ENCODE measurements at regions of chr14 and their contacts with region 1.

Region 1: GRCh38 chr14:80055667-80056496 is 155.4 kb downstream of the DIO2 start:
- DNase-seq: peak; percentile 47 to 60
- H3K4me3 ChIP-seq: no peak overlapping the region
- H3K4me3 Mint-ChIP-seq: no peak overlapping the region
- H3K27ac Mint-ChIP-seq: no peak overlapping the region
- H3K4me1 ChIP-seq: no peaks in the 10 kb centered on the region
- H3K4me1 Mint-ChIP-seq: peaks cover 6% of the 10 kb centered on the region
- H3K27me3 ChIP-seq: no peaks in the 10 kb centered on the region
- H3K27me3 Mint-ChIP-seq: no peaks in the 10 kb centered on the region
- CTCF ChIP-seq: peak; percentile 85 to 88

Region 2: DNA sequence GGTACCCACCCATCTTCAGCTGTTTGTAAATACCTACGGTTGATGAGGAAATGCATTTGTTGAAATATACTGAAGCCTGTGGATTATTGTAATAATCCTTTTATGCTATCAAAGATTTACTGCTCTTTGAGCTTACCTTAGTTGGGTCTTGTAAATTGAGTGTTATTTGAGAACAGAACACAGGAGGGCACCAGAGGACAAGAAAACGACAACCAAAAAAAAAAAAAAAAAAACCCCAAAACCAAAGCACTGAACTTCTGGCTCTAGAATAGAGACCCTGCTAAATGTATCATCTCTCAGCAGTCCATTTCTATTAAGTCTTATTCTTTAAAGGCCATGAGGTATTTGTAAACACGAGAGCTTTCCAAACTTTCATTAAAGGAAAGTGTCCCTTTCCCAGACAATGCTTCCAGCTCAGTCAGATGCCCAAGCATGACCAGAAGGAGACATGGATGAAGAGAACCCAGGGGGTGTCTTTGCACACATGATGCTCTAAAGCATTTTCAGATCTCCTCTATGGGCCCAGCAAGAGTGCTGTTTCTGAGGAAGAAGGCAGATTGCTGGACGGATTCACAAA is 1121.8 kb before region 1 on chr14:
- CTCF ChIA-PET with region 1: no interaction called
- POLR2A ChIA-PET with region 1: no interaction called
- intact Hi-C with region 1: loop called (anchors 2 kb)
- DNase-seq: peak in 1 of 2 experiments; percentile 34
- H3K4me3 ChIP-seq: no peak overlapping the region
- H3K4me3 Mint-ChIP-seq: no peak overlapping the region
- H3K27ac Mint-ChIP-seq: no peak overlapping the region
- H3K4me1 ChIP-seq: no peaks in the 10 kb centered on the region
- H3K4me1 Mint-ChIP-seq: no peaks in the 10 kb centered on the region
- H3K27me3 ChIP-seq: no peaks in the 10 kb centered on the region
- H3K27me3 Mint-ChIP-seq: no peaks in the 10 kb centered on the region
- CTCF ChIP-seq: peak; percentile 55 to 66

Region 3: GRCh38 chr14:79904497-79904896 is 151.4 kb before region 1 on chr14:
- CTCF ChIA-PET with region 1: no interaction called
- POLR2A ChIA-PET with region 1: no interaction called
- intact Hi-C with region 1: no loop called
- DNase-seq: no peak
- H3K4me3 ChIP-seq: no peak overlapping the region
- H3K4me3 Mint-ChIP-seq: no peak overlapping the region
- H3K27ac Mint-ChIP-seq: no peak overlapping the region
- H3K4me1 ChIP-seq: no peaks in the 10 kb centered on the region
- H3K4me1 Mint-ChIP-seq: no peaks in the 10 kb centered on the region
- H3K27me3 ChIP-seq: no peaks in the 10 kb centered on the region
- H3K27me3 Mint-ChIP-seq: no peaks in the 10 kb centered on the region
- CTCF ChIP-seq: no peak

Region 4: DNA sequence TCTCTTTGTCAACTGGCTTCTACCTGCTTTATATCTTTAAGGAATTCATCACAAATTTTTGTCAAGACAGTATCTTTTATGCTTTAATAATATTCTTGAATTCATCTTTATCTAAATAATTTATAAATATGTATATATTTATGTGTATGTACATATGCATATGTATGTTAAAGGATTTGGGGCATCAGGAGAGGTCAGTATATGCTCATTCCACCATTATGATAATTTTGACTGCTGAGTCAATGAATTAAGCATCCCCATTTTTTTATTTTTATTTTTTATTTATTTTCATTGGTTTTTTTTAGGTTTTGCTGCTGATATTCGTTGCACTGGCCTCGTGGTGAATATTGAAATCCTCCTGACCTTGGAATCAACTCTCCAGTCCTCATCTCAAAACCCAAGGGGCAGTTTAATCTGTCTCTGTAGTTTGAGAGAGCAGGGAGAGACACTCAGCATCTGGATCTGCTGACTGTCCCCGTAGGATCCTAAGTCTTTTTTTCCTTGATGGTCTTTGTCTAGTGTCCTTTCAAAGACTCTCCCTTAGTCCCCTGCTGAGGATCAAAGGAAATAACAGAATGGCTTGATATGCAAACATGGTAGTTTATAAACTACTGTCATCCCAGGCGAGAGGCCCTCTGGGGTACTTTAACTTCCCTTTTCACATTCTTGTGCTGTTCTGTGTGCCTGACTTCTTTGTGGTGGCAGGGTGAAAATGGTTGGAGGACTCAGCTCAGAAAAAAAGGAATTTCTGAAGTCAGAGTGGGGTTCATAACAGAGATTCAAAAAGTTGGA is 63.3 kb before region 1 on chr14:
- CTCF ChIA-PET with region 1: no interaction called
- POLR2A ChIA-PET with region 1: no interaction called
- intact Hi-C with region 1: no loop called
- DNase-seq: no peak
- H3K4me3 ChIP-seq: no peak overlapping the region
- H3K4me3 Mint-ChIP-seq: no peak overlapping the region
- H3K27ac Mint-ChIP-seq: no peak overlapping the region
- H3K4me1 ChIP-seq: no peaks in the 10 kb centered on the region
- H3K4me1 Mint-ChIP-seq: no peaks in the 10 kb centered on the region
- H3K27me3 ChIP-seq: no peaks in the 10 kb centered on the region
- H3K27me3 Mint-ChIP-seq: no peaks in the 10 kb centered on the region
- CTCF ChIP-seq: no peak

Region 5: GRCh38 chr14:80003138-80003537 is 52.7 kb before region 1 on chr14:
- CTCF ChIA-PET with region 1: no interaction called
- POLR2A ChIA-PET with region 1: no interaction called
- intact Hi-C with region 1: no loop called
- DNase-seq: peak in 1 of 2 experiments; percentile 25
- H3K4me3 ChIP-seq: no peak overlapping the region
- H3K4me3 Mint-ChIP-seq: no peak overlapping the region
- H3K27ac Mint-ChIP-seq: no peak overlapping the region
- H3K4me1 ChIP-seq: peaks cover 11% of the 10 kb centered on the region
- H3K4me1 Mint-ChIP-seq: peaks cover 12% of the 10 kb centered on the region
- H3K27me3 ChIP-seq: no peaks in the 10 kb centered on the region
- H3K27me3 Mint-ChIP-seq: no peaks in the 10 kb centered on the region
- CTCF ChIP-seq: no peak

Region 6: GRCh38 chr14:80078501-80078900 is 22.6 kb after region 1 on chr14:
- CTCF ChIA-PET with region 1: no interaction called
- POLR2A ChIA-PET with region 1: no interaction called
- intact Hi-C with region 1: no loop called
- DNase-seq: no peak
- H3K4me3 ChIP-seq: no peak overlapping the region
- H3K4me3 Mint-ChIP-seq: no peak overlapping the region
- H3K27ac Mint-ChIP-seq: no peak overlapping the region
- H3K4me1 ChIP-seq: no peaks in the 10 kb centered on the region
- H3K4me1 Mint-ChIP-seq: no peaks in the 10 kb centered on the region
- H3K27me3 ChIP-seq: no peaks in the 10 kb centered on the region
- H3K27me3 Mint-ChIP-seq: no peaks in the 10 kb centered on the region
- CTCF ChIP-seq: no peak

Region 7: DNA sequence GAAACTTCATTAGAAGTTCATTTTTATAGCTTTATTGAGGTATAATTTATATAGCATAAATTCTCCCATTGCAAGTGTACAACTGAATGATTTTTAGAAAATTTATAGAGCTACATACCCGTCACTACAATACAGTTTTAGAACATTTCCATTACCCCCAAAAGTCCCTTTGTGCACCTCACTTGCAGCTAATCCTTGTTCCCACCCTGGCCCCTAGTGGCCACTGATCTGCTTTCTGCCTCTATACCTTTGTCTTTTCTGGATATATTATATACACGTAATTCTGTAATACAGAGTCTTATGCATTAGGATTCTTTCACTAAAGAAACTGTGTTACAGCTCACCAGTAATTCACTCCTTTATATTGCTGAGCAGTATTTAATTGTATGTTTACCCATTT is 300.5 kb after region 1 on chr14:
- CTCF ChIA-PET with region 1: no interaction called
- POLR2A ChIA-PET with region 1: no interaction called
- intact Hi-C with region 1: loop called (anchors 1 kb)
- DNase-seq: peak in 1 of 2 experiments; percentile 21
- H3K4me3 ChIP-seq: no peak overlapping the region
- H3K4me3 Mint-ChIP-seq: no peak overlapping the region
- H3K27ac Mint-ChIP-seq: no peak overlapping the region
- H3K4me1 ChIP-seq: no peaks in the 10 kb centered on the region
- H3K4me1 Mint-ChIP-seq: no peaks in the 10 kb centered on the region
- H3K27me3 ChIP-seq: no peaks in the 10 kb centered on the region
- H3K27me3 Mint-ChIP-seq: no peaks in the 10 kb centered on the region
- CTCF ChIP-seq: peak; percentile 47 to 52

Region 8: GRCh38 chr14:80587075-80587724 is 531.3 kb after region 1 on chr14:
- CTCF ChIA-PET with region 1: interaction called, 8 read pairs
- POLR2A ChIA-PET with region 1: no interaction called
- intact Hi-C with region 1: loop called (anchors 2 kb)
- DNase-seq: no peak
- H3K4me3 ChIP-seq: no peak overlapping the region
- H3K4me3 Mint-ChIP-seq: no peak overlapping the region
- H3K27ac Mint-ChIP-seq: no peak overlapping the region
- H3K4me1 ChIP-seq: peaks cover 15% of the 10 kb centered on the region
- H3K4me1 Mint-ChIP-seq: peaks cover 12% of the 10 kb centered on the region
- H3K27me3 ChIP-seq: no peaks in the 10 kb centered on the region
- H3K27me3 Mint-ChIP-seq: no peaks in the 10 kb centered on the region
- CTCF ChIP-seq: peak; percentile 21 to 46

Region 9: GRCh38 chr14:80987235-80988032 is 931.6 kb after region 1 on chr14:
- CTCF ChIA-PET with region 1: interaction called, 6 read pairs
- POLR2A ChIA-PET with region 1: no interaction called
- intact Hi-C with region 1: loop called (anchors 1 kb)
- DNase-seq: peak; percentile 57 to 74
- H3K4me3 ChIP-seq: no peak overlapping the region
- H3K4me3 Mint-ChIP-seq: no peak overlapping the region
- H3K27ac Mint-ChIP-seq: no peak overlapping the region
- H3K4me1 ChIP-seq: no peaks in the 10 kb centered on the region
- H3K4me1 Mint-ChIP-seq: no peaks in the 10 kb centered on the region
- H3K27me3 ChIP-seq: no peaks in the 10 kb centered on the region
- H3K27me3 Mint-ChIP-seq: peaks cover 10% of the 10 kb centered on the region
- CTCF ChIP-seq: peak; percentile 81 to 92